Activated CD4-positive, alpha-beta memory T cell treated with anti-CD3 and anti-CD28 coated beads for 36 hours (primary cell): ENCODE measurements at regions of chr12 and their contacts with region 1.

Region 1: DNA sequence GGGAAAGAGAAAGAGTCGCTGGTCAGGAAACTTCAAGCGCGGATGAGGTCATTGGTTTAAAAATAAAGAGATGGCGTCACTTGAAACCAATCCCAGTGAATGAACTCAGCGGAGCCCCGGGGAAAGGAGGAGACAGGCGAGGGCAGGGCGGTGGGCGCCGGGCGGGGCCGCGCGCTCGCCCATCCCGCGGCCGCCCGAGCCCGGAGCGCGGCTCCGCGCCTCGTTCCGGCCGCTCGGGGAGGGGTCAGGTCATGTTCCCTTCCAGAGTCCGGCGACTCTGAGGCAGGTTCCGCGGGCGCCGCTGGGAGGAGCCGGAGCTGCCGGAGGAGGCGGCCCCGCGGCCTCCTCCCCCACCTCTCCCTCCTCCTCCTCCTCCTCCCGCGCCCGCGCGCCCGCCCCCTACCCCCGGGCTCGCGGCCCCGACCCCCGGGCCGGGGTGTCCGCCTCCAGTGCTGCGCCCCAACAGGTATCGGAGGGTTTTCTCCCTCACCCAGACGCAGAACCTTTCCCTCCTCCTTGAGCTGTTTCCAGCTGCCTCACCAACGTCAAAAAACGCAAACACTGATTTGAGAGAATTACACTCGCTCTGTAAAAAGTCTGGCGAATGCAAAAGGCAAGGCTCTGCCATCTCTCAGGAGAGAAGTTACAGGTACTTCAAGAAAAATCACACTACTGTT is at the start of gene DUSP16:
- DNase-seq: peak; percentile 85
- H3K4me3 Mint-ChIP-seq: peak within 1 kb of the TSS; percentile 79
- H3K27ac Mint-ChIP-seq: peak within 1 kb of the TSS; percentile 92
- H3K4me1 Mint-ChIP-seq: peaks cover 37% of the 10 kb centered on the region
- H3K27me3 Mint-ChIP-seq: no peaks in the 10 kb centered on the region
- total RNA-seq, gene DUSP16: 70.2 to 82.1 TPM

Region 2: DNA sequence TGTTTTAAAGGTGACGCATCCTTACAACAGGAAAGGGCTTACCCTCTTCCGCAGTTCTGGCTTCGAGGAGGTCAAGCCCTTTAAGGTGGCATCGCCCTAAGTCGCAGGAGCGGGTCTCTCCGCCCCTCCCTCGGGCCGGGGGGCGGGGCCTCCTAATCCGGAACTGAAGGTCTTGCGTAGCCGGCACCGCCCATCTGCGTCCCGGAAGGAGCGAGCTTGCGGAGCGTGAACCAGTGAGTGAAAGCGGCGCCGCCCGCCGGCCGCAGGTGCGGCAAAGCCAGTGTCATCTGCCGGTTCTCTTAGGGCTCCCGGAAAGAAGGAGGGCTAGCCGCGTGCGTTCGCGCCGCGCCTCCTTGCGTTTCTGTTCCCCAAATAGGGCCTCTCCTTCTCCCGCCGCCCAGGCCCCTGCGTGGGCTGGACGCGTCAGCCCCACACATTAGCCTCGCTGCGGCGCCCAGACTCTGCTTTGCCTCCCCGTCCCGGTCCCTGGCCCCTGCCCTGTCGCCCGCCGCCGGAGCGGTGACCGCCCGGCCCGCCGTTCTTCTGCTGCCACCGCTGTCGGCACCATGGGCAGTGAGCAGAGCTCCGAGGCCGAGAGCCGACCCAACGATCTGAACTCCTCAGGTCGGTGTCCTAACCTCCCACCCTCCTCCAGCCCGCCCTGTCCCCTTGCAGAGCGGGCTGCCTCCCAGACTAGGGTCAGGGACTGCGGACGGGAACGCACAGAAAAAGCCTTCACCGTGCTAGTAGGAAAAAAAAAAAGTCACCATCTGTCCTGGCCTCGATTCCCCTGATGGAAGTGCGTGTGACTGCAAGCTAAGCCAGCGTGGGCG is 205.6 kb before region 1 on chr12 and contains the start of gene BORCS5:
- CTCF ChIA-PET with region 1: interaction called, 17 read pairs
- POLR2A ChIA-PET with region 1: interaction called, 3 read pairs
- intact Hi-C with region 1: loop called (anchors 1 kb)
- DNase-seq: peak; percentile 99
- H3K4me3 Mint-ChIP-seq: peak within 1 kb of the TSS; percentile 98
- H3K27ac Mint-ChIP-seq: peak within 1 kb of the TSS; percentile 99
- H3K4me1 Mint-ChIP-seq: peaks cover 43% of the 10 kb centered on the region
- H3K27me3 Mint-ChIP-seq: no peaks in the 10 kb centered on the region
- total RNA-seq, gene BORCS5: 43.7 to 47.8 TPM

Region 3: GRCh38 chr12:12415886-12416285 is 146.8 kb before region 1 on chr12:
- CTCF ChIA-PET with region 1: no interaction called
- POLR2A ChIA-PET with region 1: no interaction called
- intact Hi-C with region 1: no loop called
- DNase-seq: no peak
- H3K4me3 Mint-ChIP-seq: no peak overlapping the region
- H3K27ac Mint-ChIP-seq: peak overlapping the region; percentile 59
- H3K4me1 Mint-ChIP-seq: peaks cover 28% of the 10 kb centered on the region
- H3K27me3 Mint-ChIP-seq: no peaks in the 10 kb centered on the region

Region 4: GRCh38 chr12:12486661-12487240 is 76.0 kb before region 1 on chr12:
- CTCF ChIA-PET with region 1: interaction called, 6 read pairs
- POLR2A ChIA-PET with region 1: interaction called, 5 read pairs
- intact Hi-C with region 1: loop called (anchors 2 kb)
- DNase-seq: peak; percentile 59
- H3K4me3 Mint-ChIP-seq: peak overlapping the region; percentile 6
- H3K27ac Mint-ChIP-seq: peak overlapping the region; percentile 99
- H3K4me1 Mint-ChIP-seq: peaks cover 56% of the 10 kb centered on the region
- H3K27me3 Mint-ChIP-seq: no peaks in the 10 kb centered on the region

Region 5: GRCh38 chr12:12577786-12578185 is 15.1 kb after region 1 on chr12:
- CTCF ChIA-PET with region 1: interaction called, 11 read pairs
- POLR2A ChIA-PET with region 1: interaction called, 3 read pairs
- intact Hi-C with region 1: no loop called
- DNase-seq: no peak
- H3K4me3 Mint-ChIP-seq: no peak overlapping the region
- H3K27ac Mint-ChIP-seq: peak overlapping the region; percentile 8
- H3K4me1 Mint-ChIP-seq: peaks cover 24% of the 10 kb centered on the region
- H3K27me3 Mint-ChIP-seq: no peaks in the 10 kb centered on the region

Region 6: GRCh38 chr12:12645485-12645884 is 82.8 kb after region 1 on chr12:
- CTCF ChIA-PET with region 1: interaction called, 4 read pairs
- POLR2A ChIA-PET with region 1: interaction called, 3 read pairs
- intact Hi-C with region 1: loop called (anchors 5 kb)
- DNase-seq: peak; percentile 47
- H3K4me3 Mint-ChIP-seq: peak overlapping the region; percentile 29
- H3K27ac Mint-ChIP-seq: peak overlapping the region; percentile 82
- H3K4me1 Mint-ChIP-seq: peaks cover 21% of the 10 kb centered on the region
- H3K27me3 Mint-ChIP-seq: no peaks in the 10 kb centered on the region

Region 7: GRCh38 chr12:12724661-12725545 is 162.2 kb after region 1 on chr12:
- CTCF ChIA-PET with region 1: no interaction called
- POLR2A ChIA-PET with region 1: interaction called, 8 read pairs
- intact Hi-C with region 1: loop called (anchors 1 kb)
- DNase-seq: peak; percentile 95
- H3K4me3 Mint-ChIP-seq: peak overlapping the region; percentile 95
- H3K27ac Mint-ChIP-seq: peak overlapping the region; percentile 97
- H3K4me1 Mint-ChIP-seq: peaks cover 50% of the 10 kb centered on the region
- H3K27me3 Mint-ChIP-seq: peaks cover 2% of the 10 kb centered on the region